A549 (cell line): ENCODE measurements at regions of chr3 and their contacts with region 1.

Region 1: GRCh38 chr3:154252759-154253638 is 71.3 kb downstream of the DHX36 start:
- DNase-seq: peak; percentile 80 to 89
- ATAC-seq: peak; percentile 98 to 99
- H3K4me3 ChIP-seq: no peak overlapping the region
- H3K27ac ChIP-seq: no peak overlapping the region
- H3K4me1 ChIP-seq: no peaks in the 10 kb centered on the region
- CTCF ChIP-seq: peak; percentile 95
- EP300 ChIP-seq: no peak
- POLR2A ChIP-seq: no peak
- RAD21 ChIP-seq: peak; percentile 92

Region 2: GRCh38 chr3:154098376-154098775 is 154.6 kb before region 1 on chr3:
- CTCF ChIA-PET with region 1: interaction called, 12 read pairs
- POLR2A ChIA-PET with region 1: no interaction called
- DNase-seq: no peak
- ATAC-seq: no peak
- H3K4me3 ChIP-seq: no peak overlapping the region
- H3K27ac ChIP-seq: no peak overlapping the region
- H3K4me1 ChIP-seq: no peaks in the 10 kb centered on the region
- CTCF ChIP-seq: no peak
- EP300 ChIP-seq: no peak
- POLR2A ChIP-seq: no peak
- RAD21 ChIP-seq: no peak

Region 3: GRCh38 chr3:154120961-154121700 is 131.9 kb before region 1 on chr3 and contains the start of gene ARHGEF26:
- CTCF ChIA-PET with region 1: interaction called, 19 read pairs
- POLR2A ChIA-PET with region 1: no interaction called
- DNase-seq: peak; percentile 82 to 83
- ATAC-seq: peak; percentile 82 to 91
- H3K4me3 ChIP-seq: peak within 1 kb of the TSS; percentile 77
- H3K27ac ChIP-seq: peak within 1 kb of the TSS; percentile 75 to 87
- H3K4me1 ChIP-seq: peaks cover 43% of the 10 kb centered on the region
- CTCF ChIP-seq: no peak
- EP300 ChIP-seq: no peak
- POLR2A ChIP-seq: peak; percentile 55
- RAD21 ChIP-seq: no peak
- polyA plus RNA-seq, gene ARHGEF26: 2.9 and 4.9 TPM in 2 replicates

Region 4: GRCh38 chr3:154240235-154240634 is 12.8 kb before region 1 on chr3:
- CTCF ChIA-PET with region 1: interaction called, 15 read pairs
- POLR2A ChIA-PET with region 1: no interaction called
- DNase-seq: no peak
- ATAC-seq: no peak
- H3K4me3 ChIP-seq: no peak overlapping the region
- H3K27ac ChIP-seq: no peak overlapping the region
- H3K4me1 ChIP-seq: peaks cover 19% of the 10 kb centered on the region
- CTCF ChIP-seq: no peak
- EP300 ChIP-seq: no peak
- POLR2A ChIP-seq: no peak
- RAD21 ChIP-seq: no peak